K562 (cell line): ENCODE measurements at regions of chr20 and their contacts with region 1.

Region 1: GRCh38 chr20:51372176-51372803 is 170.2 kb downstream of the NFATC2 start:
- DNase-seq: peak; percentile 71 to 85 (median 76)
- ATAC-seq: peak; percentile 94
- H3K4me3 ChIP-seq: no peak overlapping the region
- H3K27ac ChIP-seq: no peak overlapping the region
- H3K4me1 ChIP-seq: peaks cover 17 to 26% of the 10 kb centered on the region in 2 experiments
- H3K27me3 ChIP-seq: peaks cover 8 to 22% of the 10 kb centered on the region in 2 experiments; a peak in 4 of 5 replicates
- CTCF ChIP-seq: peak; percentile 88 to 90 (median 89)
- EP300 ChIP-seq: no peak
- POLR2A ChIP-seq: no peak
- RAD21 ChIP-seq: peak; percentile 87 to 92

Region 2: GRCh38 chr20:51616060-51616459 is 243.8 kb after region 1 on chr20:
- CTCF ChIA-PET with region 1: no interaction called
- POLR2A ChIA-PET with region 1: interaction called, 3 read pairs
- in situ Hi-C with region 1: no loop called
- intact Hi-C with region 1: loop called (anchors 2 kb)
- DNase-seq: no peak
- ATAC-seq: peak; percentile 46; the same call in 2 of the 3 replicates
- H3K4me3 ChIP-seq: no peak overlapping the region
- H3K27ac ChIP-seq: no peak overlapping the region
- H3K4me1 ChIP-seq: peaks cover 11 to 12% of the 10 kb centered on the region in 2 experiments; a peak in 4 of 5 replicates
- H3K27me3 ChIP-seq: peaks cover 15 to 22% of the 10 kb centered on the region in 2 experiments
- CTCF ChIP-seq: peak in 2 of 3 experiments; percentile 21 to 26; a peak in 3 of 6 replicates
- EP300 ChIP-seq: no peak
- POLR2A ChIP-seq: no peak
- RAD21 ChIP-seq: 0 out of 4 replicates have a peak, but pooled peaks of 1 of the 2 experiments have one; percentile 12

Region 3: DNA sequence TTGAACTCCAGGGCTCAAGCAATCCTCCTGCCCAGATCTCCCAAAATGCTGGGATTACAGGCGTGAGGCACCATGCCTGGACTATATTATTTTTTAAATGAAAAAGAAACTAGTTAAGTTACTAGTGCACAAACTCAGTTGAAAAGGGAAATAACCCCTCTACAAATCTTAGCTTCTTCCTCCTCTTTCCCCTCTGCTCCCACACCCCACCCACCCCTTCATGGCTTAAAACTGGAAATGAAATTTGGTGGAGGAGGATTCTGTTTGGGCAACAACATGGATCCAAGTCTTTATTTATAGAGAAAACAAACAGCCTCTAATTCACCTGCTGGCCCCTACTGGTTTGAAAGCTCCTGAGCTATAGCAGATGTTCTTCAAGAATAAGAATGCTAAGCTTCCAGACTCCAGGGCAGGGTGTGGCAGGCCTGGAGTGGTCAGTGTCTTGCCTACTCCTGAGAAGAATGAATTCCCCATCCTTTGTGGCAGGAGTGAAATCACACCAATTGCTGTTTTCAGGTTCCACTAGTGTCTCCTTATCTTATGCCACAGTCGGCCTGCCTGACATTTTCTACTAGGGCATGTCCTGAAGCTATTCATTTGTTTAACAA is 745.8 kb after region 1 on chr20:
- CTCF ChIA-PET with region 1: no interaction called
- POLR2A ChIA-PET with region 1: no interaction called
- in situ Hi-C with region 1: no loop called
- intact Hi-C with region 1: no loop called
- DNase-seq: no peak
- ATAC-seq: no peak
- H3K4me3 ChIP-seq: no peak overlapping the region
- H3K27ac ChIP-seq: no peak overlapping the region
- H3K4me1 ChIP-seq: no peaks in the 10 kb centered on the region
- H3K27me3 ChIP-seq: no peaks in the 10 kb centered on the region
- CTCF ChIP-seq: no peak
- EP300 ChIP-seq: no peak
- POLR2A ChIP-seq: no peak
- RAD21 ChIP-seq: no peak